MCF 10A (cell line): ENCODE measurements at regions of chr1 and their contacts with region 1.

Region 1: DNA sequence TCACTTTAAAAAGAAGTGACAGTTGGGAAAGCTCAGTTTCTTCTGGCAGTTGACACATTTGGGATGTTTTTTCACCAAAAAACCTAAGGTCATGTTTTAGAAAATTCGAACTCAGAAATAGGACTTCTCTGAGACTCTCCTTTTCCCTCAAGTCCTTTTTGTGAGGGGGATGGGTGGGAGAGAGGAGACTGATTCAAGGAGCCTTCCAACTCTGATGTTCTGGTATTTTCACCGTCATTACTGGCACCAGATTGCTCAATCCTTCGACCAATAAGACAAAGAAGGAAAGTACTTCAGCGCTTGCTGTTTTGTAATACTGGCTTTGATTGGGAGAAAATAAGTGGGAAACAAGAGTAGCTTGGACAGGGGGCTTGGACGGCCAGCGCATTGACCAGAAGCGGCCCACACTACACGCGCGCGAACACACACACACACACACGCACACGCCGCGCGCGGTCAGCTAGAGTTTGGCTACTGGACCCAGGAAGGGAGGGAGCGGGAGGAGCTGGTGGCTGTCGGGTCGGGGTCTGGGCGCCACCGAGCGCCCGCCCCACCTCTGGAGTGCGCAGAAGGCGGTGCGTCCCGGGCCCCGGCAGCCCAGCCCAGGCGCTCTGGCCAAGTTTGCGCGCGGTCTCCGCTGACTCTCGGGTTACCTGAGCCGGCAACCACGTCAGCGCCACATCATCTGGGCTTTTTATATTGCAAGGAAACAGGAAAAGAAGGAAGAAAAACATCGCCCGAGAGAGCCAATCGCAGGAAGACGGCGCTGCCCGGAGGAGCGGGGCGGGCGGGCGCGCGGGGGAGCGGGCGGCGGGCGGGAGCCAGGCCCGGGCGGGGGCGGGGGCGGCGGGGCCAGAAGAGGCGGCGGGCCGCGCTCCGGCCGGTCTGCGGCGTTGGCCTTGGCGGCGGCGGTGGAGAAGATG is at the start of gene KCNK1:
- DNase-seq: peak; percentile 97
- H3K4me3 Mint-ChIP-seq: peak within 1 kb of the TSS; percentile 88
- H3K27ac Mint-ChIP-seq: peak within 1 kb of the TSS; percentile 96
- H3K4me1 Mint-ChIP-seq: peaks cover 23% of the 10 kb centered on the region
- H3K27me3 Mint-ChIP-seq: peaks cover 12% of the 10 kb centered on the region
- CTCF ChIP-seq: no peak
- total RNA-seq, gene KCNK1: 24.3 and 41.3 TPM in 2 replicates

Region 2: DNA sequence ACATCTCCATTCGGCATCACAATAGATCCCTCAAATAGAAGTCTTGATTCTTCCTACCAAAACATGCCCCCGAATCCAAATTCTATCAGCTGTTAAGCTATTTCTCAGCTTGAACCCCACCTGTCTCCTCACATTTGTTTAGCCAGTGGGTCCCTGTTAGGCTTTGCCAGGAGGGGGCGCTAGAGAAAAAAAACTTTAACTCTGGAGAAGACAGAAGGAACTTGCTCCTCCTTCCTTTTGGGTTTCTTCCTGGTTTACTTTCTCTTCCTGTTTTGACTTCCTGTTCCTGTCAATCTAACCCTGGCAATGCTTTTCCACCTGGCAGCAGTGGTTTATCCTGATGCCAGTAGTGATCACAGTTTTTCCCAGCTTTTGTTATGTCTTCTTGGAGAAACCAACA is 95.2 kb before region 1 on chr1:
- CTCF ChIA-PET with region 1: interaction called, 3 read pairs
- POLR2A ChIA-PET with region 1: interaction called, 19 read pairs
- intact Hi-C with region 1: loop called (anchors 2 kb)
- DNase-seq: peak; percentile 83
- H3K4me3 Mint-ChIP-seq: no peak overlapping the region
- H3K27ac Mint-ChIP-seq: no peak overlapping the region
- H3K4me1 Mint-ChIP-seq: peaks cover 14% of the 10 kb centered on the region
- H3K27me3 Mint-ChIP-seq: no peaks in the 10 kb centered on the region
- CTCF ChIP-seq: peak; percentile 83

Region 3: GRCh38 chr1:233543340-233544255 is 69.9 kb before region 1 on chr1:
- CTCF ChIA-PET with region 1: no interaction called
- POLR2A ChIA-PET with region 1: interaction called, 23 read pairs
- intact Hi-C with region 1: loop called (anchors 1 kb)
- DNase-seq: peak; percentile 100
- H3K4me3 Mint-ChIP-seq: no peak overlapping the region
- H3K27ac Mint-ChIP-seq: peak overlapping the region; percentile 72
- H3K4me1 Mint-ChIP-seq: peaks cover 20% of the 10 kb centered on the region
- H3K27me3 Mint-ChIP-seq: no peaks in the 10 kb centered on the region
- CTCF ChIP-seq: no peak

Region 4: GRCh38 chr1:233627376-233627775 is 13.9 kb after region 1 on chr1:
- CTCF ChIA-PET with region 1: interaction called, 9 read pairs
- POLR2A ChIA-PET with region 1: interaction called, 19 read pairs
- intact Hi-C with region 1: no loop called
- DNase-seq: peak; percentile 42
- H3K4me3 Mint-ChIP-seq: no peak overlapping the region
- H3K27ac Mint-ChIP-seq: no peak overlapping the region
- H3K4me1 Mint-ChIP-seq: no peaks in the 10 kb centered on the region
- H3K27me3 Mint-ChIP-seq: no peaks in the 10 kb centered on the region
- CTCF ChIP-seq: no peak

Region 5: GRCh38 chr1:233668725-233669294 is 55.3 kb after region 1 on chr1:
- CTCF ChIA-PET with region 1: interaction called, 3 read pairs
- POLR2A ChIA-PET with region 1: interaction called, 8 read pairs
- intact Hi-C with region 1: loop called (anchors 1 kb)
- DNase-seq: peak; percentile 96
- H3K4me3 Mint-ChIP-seq: no peak overlapping the region
- H3K27ac Mint-ChIP-seq: peak overlapping the region; percentile 92
- H3K4me1 Mint-ChIP-seq: peaks cover 29% of the 10 kb centered on the region
- H3K27me3 Mint-ChIP-seq: no peaks in the 10 kb centered on the region
- CTCF ChIP-seq: no peak

Region 6: DNA sequence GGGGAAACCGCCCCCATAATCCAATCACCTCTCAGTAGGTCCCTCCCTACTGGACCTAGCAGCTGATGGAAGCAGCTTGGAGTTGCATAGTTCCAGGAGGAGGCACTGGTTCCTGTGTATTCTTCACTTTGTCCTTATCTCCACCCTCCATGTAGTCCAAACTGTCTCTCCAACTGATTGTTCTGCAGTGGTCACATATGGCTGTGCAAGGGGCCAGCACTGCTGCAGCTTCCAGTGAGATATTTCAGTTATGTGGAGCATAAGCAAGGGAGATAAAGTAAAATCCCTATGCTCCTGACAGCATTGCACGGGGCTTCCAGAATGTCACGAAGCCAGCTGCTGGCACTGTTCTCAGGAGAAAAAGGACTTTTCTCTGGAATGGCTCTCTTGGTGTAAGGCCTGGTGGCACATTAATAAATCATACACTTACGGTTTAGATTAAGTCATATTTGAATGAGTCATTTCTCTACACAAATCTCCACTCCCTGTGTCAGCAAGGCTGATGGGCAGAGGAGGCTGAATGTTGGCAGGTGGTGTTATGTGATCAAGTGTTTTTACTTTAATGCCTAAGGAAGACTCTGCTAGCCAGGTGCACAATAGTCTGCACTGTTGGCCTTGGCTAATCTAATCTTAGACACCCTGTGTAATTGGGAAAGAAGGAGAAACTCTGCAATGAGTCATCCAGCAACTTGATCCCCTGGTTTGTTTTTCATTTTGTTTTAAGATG is 93.8 kb after region 1 on chr1:
- CTCF ChIA-PET with region 1: no interaction called
- POLR2A ChIA-PET with region 1: interaction called, 6 read pairs
- intact Hi-C with region 1: loop called (anchors 5 kb)
- DNase-seq: peak; percentile 99
- H3K4me3 Mint-ChIP-seq: no peak overlapping the region
- H3K27ac Mint-ChIP-seq: peak overlapping the region; percentile 87
- H3K4me1 Mint-ChIP-seq: peaks cover 46% of the 10 kb centered on the region
- H3K27me3 Mint-ChIP-seq: no peaks in the 10 kb centered on the region
- CTCF ChIP-seq: no peak

Region 7: DNA sequence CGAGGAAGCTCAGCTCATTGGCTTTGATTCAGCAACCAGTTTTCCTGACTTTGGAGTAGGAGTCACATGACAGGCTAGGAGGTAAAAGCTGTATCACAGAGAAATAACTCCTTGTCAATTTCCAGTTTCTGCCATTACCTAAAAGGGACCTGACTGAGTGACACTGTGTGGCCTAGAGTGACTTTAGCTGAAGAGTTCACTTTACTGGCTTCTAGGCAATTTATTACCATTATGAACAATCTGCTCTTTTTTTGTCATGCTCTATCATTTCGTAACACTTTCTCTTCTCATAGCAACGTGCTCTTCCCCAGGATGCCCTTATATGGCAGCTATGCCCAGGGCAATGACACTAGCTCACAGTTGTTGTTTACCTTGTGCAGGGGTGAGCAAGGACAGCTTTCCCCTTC is 107.6 kb after region 1 on chr1:
- CTCF ChIA-PET with region 1: interaction called, 3 read pairs
- POLR2A ChIA-PET with region 1: interaction called, 9 read pairs
- intact Hi-C with region 1: loop called (anchors 5 kb)
- DNase-seq: peak; percentile 84
- H3K4me3 Mint-ChIP-seq: no peak overlapping the region
- H3K27ac Mint-ChIP-seq: peak overlapping the region; percentile 22
- H3K4me1 Mint-ChIP-seq: peaks cover 32% of the 10 kb centered on the region
- H3K27me3 Mint-ChIP-seq: no peaks in the 10 kb centered on the region
- CTCF ChIP-seq: no peak

Region 8: DNA sequence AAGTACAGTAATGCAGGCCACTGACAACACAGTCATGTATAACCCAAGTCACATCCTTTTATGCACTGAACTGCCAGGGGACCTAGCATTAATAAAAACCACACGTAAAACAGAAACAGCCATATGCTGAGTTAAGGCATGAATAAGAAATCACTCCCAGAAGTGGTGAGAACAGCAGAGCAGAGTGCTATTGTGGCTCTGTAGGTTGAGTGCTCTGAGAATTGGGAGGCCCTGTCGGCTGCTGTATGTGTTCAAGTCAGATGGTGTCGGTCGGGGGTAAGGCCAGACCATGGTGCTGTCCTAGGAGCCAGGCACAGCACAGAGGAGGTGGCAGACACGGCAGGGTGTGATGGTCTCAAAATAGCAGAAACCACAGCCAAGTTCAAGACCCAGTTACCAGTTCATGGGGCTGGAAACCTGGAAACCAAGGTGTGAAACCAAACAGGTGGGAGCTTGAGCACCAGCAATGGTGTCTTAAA is 633.2 kb after region 1 on chr1:
- CTCF ChIA-PET with region 1: no interaction called
- POLR2A ChIA-PET with region 1: no interaction called
- intact Hi-C with region 1: no loop called
- DNase-seq: no peak
- H3K4me3 Mint-ChIP-seq: no peak overlapping the region
- H3K27ac Mint-ChIP-seq: no peak overlapping the region
- H3K4me1 Mint-ChIP-seq: no peaks in the 10 kb centered on the region
- H3K27me3 Mint-ChIP-seq: no peaks in the 10 kb centered on the region
- CTCF ChIP-seq: no peak